ENCODE measurements at regions of chr13 and their contacts with region 1.

Region 1: GRCh38 chr13:40624383-40624782 is 42.1 kb downstream of the FOXO1 start:
- DNase-seq: peak; percentile 78
- ATAC-seq: peak; percentile 86
- H3K4me3 Mint-ChIP-seq: no peak overlapping the region
- H3K27ac Mint-ChIP-seq: peak overlapping the region; percentile 40
- H3K4me1 Mint-ChIP-seq: peaks cover 81% of the 10 kb centered on the region
- H3K27me3 Mint-ChIP-seq: no peaks in the 10 kb centered on the region

Region 2: DNA sequence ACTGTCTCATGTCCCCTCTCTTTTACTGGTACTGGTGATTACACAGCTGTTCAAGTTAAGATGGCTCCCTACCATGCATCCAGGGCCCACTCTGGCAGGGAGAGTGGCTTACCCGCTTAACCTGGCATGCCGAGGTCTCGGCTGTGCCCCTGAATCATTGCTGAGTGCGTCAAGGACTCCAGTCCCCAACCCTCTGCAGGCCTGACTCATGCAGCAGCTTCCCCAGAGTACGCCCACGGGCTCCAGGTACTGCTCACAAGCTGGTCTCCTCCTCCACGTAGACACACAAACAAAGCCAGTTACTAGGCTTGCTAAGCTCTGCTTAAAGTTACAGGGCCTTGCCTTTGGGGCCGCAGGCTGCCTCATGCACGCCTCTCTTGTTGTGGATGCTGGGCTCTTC is 521.5 kb before region 1 on chr13:
- CTCF ChIA-PET with region 1: no interaction called
- POLR2A ChIA-PET with region 1: no interaction called
- intact Hi-C with region 1: no loop called
- DNase-seq: peak; percentile 98
- ATAC-seq: peak; percentile 86
- H3K4me3 Mint-ChIP-seq: peak overlapping the region; percentile 62
- H3K27ac Mint-ChIP-seq: peak overlapping the region; percentile 99
- H3K4me1 Mint-ChIP-seq: peaks cover 53% of the 10 kb centered on the region
- H3K27me3 Mint-ChIP-seq: no peaks in the 10 kb centered on the region

Region 3: DNA sequence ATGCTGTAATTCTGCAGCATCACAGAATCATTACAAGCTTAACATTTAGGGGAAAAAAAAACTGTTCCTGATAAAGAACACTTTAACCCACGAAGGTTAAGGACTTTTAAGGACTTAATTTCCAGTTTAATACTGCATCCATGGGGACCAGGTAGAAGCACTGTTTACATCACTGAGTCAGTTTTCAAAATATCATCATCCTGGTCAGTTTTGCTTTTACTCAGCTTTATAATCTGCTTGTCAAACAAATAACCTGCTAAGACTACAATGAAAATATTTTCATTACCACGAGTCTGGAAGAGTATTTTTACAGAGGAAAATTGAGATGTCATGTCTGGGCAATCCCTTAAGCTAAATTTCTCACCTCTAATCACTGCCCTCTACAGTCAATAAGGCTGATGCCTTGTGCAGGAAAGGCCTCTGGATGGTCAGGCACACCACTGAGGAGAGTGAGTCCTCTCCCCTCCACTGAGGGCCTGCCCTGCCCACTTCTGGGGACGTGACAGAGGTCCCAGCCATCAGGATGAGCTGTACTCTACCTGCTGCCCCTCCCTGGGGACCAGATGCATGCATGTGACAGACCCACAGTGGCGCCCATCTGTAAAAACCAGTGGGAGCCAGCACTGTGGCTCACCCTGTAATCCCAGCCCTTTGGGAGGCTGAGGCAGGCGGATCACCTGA is 11.1 kb after region 1 on chr13:
- CTCF ChIA-PET with region 1: interaction called, 5 read pairs
- POLR2A ChIA-PET with region 1: no interaction called
- intact Hi-C with region 1: loop called in 1 of 2 experiments (anchors 1 kb)
- DNase-seq: no peak
- ATAC-seq: peak; percentile 45
- H3K4me3 Mint-ChIP-seq: no peak overlapping the region
- H3K27ac Mint-ChIP-seq: peak overlapping the region; percentile 63
- H3K4me1 Mint-ChIP-seq: peaks cover 88% of the 10 kb centered on the region
- H3K27me3 Mint-ChIP-seq: no peaks in the 10 kb centered on the region

Measured in activated CD4-positive, alpha-beta T cell treated with anti-CD3 and anti-CD28 coated beads for 36 hours (primary cell).